Esophagus muscularis mucosa (tissue), 4 donors: ENCODE measurements at regions of chr9 and their contacts with region 1.

Region 1: DNA sequence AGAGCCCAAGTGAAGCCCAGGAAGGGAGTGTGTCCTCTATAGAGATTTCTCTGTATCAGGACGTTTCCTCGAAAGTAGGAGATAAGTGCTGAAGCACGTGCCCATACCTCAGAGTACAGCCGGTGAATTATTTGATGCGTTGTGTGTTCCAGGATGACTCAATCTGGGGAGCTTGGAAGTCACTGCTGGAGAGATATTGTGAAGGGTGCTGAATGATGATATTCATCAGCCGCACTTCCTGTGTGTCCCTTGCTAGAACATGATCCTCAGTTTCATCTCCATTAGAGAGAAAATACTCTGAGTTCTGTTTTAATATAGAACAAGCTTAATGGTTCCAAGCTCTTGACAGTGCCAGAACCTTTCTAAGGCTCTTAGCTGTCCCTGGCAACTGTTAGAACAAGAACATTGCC is 402.3 kb upstream of the ADAMTSL1 start:
- DNase-seq: no peak
- H3K4me3 ChIP-seq: peak overlapping the region in 1 of 4 donors; percentile 15
- H3K27ac ChIP-seq: peak overlapping the region; percentile 61 to 75 (median 68)
- H3K4me1 ChIP-seq: peaks cover 0 to 72% (median 66%) of the 10 kb centered on the region in 4 donors
- H3K27me3 ChIP-seq: no peaks in the 10 kb centered on the region
- CTCF ChIP-seq: no peak
- EP300 ChIP-seq: no peak
- POLR2A ChIP-seq: no peak

Region 2: DNA sequence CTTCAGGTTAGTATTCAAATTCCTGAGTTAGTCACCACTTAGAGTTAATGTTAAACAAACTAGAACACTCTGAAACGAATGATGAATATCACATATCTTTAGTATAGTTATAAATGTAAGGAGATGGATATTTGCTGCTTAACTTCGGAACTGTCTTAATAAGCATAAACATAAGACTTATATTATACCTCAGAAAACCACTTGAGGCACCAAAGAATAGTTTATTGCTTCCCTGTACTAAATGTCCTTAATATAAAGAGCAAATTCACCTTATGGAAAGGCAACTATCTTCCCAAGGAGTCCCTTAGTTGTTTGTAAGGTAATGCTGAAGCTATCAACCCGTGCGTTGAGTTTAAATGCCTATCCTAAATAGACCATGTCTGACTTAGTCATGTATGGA is 102.3 kb after region 1 on chr9:
- intact Hi-C with region 1: loop called (anchors 10 kb)
- DNase-seq: no peak
- H3K4me3 ChIP-seq: no peak overlapping the region
- H3K27ac ChIP-seq: peak overlapping the region in 3 of 4 donors; percentile 8 to 53 (median 27)
- H3K4me1 ChIP-seq: peaks cover 0 to 34% (median 19%) of the 10 kb centered on the region in 4 donors
- H3K27me3 ChIP-seq: no peaks in the 10 kb centered on the region
- CTCF ChIP-seq: no peak
- EP300 ChIP-seq: no peak
- POLR2A ChIP-seq: no peak